Common myeloid progenitor, CD34-positive (primary cell): ENCODE measurements at regions of chr6 and their contacts with region 1.

Region 1: DNA sequence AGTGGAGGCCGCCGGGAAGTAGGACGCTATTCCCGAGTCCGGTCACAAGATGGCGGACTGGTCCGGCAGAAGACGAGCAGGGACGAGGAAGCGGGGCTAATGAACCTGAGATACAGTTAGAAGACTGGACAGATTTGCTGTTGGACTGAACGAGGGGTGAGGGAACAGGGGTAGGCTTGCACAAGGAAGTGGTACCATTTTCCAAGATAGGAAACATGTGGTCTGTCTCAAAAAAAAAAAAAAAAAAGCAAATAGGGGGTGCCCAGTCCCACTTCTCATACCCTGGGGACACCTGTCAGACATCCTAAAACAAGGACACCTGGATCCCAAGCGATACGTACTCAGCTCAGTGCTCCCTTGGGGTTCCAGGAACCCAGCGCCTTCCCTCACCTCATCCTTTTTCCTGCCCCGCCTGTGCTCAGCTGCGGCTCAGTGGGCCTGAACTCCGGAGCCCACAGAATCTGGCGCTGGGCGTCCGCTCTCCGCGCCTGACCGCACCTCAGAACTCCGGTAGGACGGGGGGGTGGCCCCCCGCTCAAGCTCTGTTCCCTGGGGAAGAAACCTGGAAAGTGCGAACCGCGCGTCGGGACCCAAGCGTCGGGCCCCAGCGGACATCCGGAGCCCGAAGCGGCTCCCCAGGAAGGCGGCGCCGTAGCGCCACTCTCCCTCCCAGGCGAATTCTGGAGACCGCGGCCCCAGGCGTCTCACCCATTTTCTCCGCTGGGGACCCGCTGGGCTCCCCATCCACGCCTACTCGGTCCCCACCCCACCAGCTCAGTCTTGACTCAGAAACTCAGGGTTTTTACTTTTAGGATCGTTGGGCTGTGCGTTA is at the start of gene LY6G5C:
- DNase-seq: peak; percentile 66 to 68 (median 67)
- H3K4me3 ChIP-seq: peak within 1 kb of the TSS; percentile 60 to 89 (median 79)
- H3K27ac ChIP-seq: peak within 1 kb of the TSS in 1 of 2 experiments; percentile 1
- H3K4me1 ChIP-seq: peaks cover 0 to 38% (median 35%) of the 10 kb centered on the region in 4 experiments
- H3K27me3 ChIP-seq: no peaks in the 10 kb centered on the region

Region 2: GRCh38 chr6:31497531-31498476 is 183.3 kb before region 1 on chr6 and contains the start of gene MICB:
- CTCF ChIA-PET with region 1: no interaction called
- POLR2A ChIA-PET with region 1: no interaction called
- DNase-seq: peak; percentile 85 to 93 (median 92)
- H3K4me3 ChIP-seq: peak within 1 kb of the TSS; percentile 56 to 90 (median 77)
- H3K27ac ChIP-seq: peak within 1 kb of the TSS in 1 of 2 experiments; percentile 68
- H3K4me1 ChIP-seq: peaks cover 9 to 39% (median 32%) of the 10 kb centered on the region in 4 experiments
- H3K27me3 ChIP-seq: no peaks in the 10 kb centered on the region

Region 3: DNA sequence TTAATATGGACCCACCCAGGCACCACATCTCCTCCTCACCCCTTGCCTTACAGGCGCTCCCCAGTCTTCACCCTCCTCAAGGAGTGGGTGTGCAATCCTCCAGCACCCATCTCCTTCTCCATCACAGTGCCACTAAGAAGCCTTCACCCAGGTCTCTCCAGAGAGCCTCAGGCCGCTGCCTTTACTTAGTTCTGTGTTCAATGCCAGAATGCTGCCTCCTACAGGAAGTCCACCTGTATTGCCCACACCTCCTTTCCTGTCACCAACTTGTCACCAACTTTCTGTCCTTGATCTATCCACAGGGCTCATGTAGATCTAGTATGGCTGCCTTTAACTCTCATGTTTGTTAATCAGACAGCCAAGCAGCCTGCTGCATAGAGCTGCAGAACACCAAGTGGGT is 95.6 kb before region 1 on chr6:
- CTCF ChIA-PET with region 1: no interaction called
- POLR2A ChIA-PET with region 1: no interaction called
- DNase-seq: peak in 2 of 3 donors; percentile 31 to 48
- H3K4me3 ChIP-seq: peak overlapping the region in 3 of 7 experiments; percentile 35 to 76 (median 51)
- H3K27ac ChIP-seq: peak overlapping the region in 1 of 2 experiments; percentile 76
- H3K4me1 ChIP-seq: peaks cover 21 to 93% (median 81%) of the 10 kb centered on the region in 4 experiments
- H3K27me3 ChIP-seq: no peaks in the 10 kb centered on the region

Region 4: DNA sequence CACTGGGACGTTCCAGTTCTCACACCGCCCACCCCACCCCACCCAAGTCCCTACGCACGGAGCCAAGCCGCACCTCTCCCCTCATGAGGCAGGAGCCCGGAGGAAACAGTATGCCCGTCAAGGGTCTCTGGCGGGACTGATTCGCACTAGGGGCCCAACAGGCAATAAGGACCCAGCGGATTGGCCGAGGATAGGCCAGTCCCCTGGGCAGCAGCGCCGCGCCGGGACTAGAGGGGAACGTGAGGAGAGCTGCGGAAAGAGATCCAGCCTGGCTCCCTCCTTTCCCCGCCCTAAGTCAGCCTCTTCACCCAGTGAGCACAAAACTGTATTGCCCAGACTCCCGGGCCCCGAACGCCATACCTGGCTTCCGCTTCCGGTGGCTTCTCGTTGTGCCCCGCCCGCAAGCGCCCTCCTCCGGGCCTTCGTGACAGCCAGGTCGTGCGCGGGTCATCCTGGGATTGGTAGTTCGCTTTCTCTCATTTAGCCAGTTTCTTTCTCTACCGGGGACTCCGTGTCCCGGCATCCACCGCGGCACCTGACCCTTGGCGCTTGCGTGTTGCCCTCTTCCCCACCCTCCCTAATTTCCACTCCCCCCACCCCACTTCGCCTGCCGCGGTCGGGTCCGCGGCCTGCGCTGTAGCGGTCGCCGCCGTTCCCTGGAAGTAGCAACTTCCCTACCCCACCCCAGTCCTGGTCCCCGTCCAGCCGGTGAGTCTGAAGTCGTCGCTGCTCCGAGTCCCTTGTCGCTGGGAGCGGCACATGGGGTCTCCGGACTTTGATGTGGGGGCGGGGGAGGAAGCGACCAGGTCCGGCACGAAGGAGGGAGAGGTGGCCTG is 15.3 kb before region 1 on chr6 and contains the start of gene CSNK2B:
- CTCF ChIA-PET with region 1: interaction called, 15 read pairs
- POLR2A ChIA-PET with region 1: no interaction called
- DNase-seq: peak; percentile 98
- H3K4me3 ChIP-seq: peak within 1 kb of the TSS; percentile 79 to 99 (median 91)
- H3K27ac ChIP-seq: peak within 1 kb of the TSS; percentile 96 to 99
- H3K4me1 ChIP-seq: peaks cover 11 to 57% (median 40%) of the 10 kb centered on the region in 4 experiments
- H3K27me3 ChIP-seq: no peaks in the 10 kb centered on the region